ENCODE measurements at regions of chr3 and their contacts with region 1.

Region 1: DNA sequence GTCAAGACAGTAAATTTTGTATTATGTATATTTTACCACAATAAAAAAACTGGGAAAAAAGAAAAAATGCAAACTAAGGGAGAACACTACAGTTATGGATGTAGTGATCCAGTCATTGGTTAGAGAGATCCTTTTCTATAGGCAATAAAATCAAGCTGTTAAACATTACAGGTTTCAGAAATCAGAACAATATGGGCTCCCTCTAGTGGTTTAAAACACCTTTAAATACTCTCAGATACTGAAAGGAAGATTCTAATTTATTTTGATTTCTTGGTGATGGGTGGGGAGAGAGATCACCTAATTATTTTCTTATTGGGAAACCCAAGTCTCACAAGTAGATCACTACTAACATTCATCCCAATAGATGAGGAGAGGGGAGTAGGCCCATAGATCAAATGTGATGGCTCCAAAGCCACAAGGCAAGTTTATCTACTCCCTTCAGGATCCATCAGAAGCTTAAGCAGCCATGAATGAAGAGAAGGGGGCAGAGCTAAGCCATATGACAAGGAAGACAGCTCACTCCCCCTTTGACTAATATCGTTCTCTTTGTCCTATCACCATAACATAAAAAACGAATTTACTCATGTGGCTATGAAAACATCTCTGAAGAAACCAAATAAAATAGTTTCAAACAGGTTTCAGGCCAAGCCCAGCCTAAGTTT is 118.6 kb downstream of the ANO10 start:
- DNase-seq: no peak
- H3K4me3 Mint-ChIP-seq: no peak overlapping the region
- H3K27ac Mint-ChIP-seq: no peak overlapping the region
- H3K4me1 Mint-ChIP-seq: peaks cover 6% of the 10 kb centered on the region
- H3K27me3 Mint-ChIP-seq: peaks cover 17% of the 10 kb centered on the region

Region 2: DNA sequence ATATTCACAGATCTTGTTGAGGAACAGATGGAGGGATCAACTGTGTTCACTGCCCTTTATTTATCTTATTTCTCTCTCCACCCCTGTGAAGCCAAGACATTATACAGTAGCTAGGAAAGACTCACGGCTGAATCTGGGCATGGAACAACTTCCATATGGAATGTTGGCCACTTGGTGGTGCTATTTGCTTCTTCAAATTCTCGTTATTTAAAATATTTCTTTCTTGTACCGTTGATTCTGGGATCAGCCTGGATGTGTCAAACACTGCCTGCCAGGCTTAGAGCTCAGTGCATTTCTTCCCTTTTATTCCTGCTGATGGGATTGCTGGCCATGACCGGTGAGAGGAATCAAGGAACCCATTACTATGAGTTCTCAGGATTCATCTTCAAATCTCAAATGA is 541.6 kb before region 1 on chr3:
- intact Hi-C with region 1: loop called (anchors 10 kb)
- DNase-seq: no peak
- H3K4me3 Mint-ChIP-seq: no peak overlapping the region
- H3K27ac Mint-ChIP-seq: no peak overlapping the region
- H3K4me1 Mint-ChIP-seq: no peaks in the 10 kb centered on the region
- H3K27me3 Mint-ChIP-seq: peaks cover 14% of the 10 kb centered on the region

Region 3: DNA sequence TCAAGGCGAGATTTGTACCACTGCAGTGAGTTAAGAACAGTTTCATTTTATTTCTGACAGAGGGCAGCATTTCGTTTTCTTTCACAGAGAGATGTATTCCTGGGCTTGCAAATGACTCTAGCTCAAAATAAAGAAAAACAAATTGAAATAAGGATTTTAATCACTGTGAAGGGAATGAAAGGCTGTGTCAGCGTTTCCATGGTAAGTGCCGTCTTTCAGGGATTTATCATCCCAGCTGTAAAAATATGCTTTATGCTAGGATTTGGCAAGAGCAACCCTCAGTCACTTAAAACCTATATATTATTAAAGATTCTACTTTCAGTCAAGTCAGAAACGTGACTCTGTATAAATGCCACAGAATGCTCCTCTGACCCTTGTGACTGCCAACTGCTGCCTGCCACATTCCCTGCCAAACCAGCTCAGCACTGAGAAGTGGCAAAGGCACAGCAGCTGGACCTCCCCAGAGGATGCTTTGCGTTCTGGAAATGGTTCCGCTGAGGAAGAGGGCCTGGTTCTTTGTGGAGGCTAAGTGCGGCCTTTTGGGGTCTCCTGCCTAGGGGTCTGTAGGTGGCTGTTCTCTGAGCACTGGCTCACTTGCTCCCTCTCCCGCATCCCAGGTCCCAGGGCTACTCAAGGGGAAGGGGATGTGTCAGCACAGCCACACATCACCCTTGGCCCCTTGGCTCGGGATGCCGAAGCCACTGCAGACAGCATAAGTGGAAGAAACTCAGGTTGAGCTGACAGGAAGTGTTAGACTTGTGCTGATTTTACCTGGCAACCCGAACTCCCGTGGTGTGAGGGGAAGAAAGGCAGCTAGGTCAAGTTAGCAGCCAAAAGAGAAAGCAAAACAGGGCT is 340.7 kb before region 1 on chr3:
- intact Hi-C with region 1: loop called (anchors 1 kb)
- DNase-seq: peak; percentile 36
- H3K4me3 Mint-ChIP-seq: peak overlapping the region; percentile 21
- H3K27ac Mint-ChIP-seq: peak overlapping the region; percentile 73
- H3K4me1 Mint-ChIP-seq: peaks cover 15% of the 10 kb centered on the region
- H3K27me3 Mint-ChIP-seq: peaks cover 4% of the 10 kb centered on the region

Region 4: DNA sequence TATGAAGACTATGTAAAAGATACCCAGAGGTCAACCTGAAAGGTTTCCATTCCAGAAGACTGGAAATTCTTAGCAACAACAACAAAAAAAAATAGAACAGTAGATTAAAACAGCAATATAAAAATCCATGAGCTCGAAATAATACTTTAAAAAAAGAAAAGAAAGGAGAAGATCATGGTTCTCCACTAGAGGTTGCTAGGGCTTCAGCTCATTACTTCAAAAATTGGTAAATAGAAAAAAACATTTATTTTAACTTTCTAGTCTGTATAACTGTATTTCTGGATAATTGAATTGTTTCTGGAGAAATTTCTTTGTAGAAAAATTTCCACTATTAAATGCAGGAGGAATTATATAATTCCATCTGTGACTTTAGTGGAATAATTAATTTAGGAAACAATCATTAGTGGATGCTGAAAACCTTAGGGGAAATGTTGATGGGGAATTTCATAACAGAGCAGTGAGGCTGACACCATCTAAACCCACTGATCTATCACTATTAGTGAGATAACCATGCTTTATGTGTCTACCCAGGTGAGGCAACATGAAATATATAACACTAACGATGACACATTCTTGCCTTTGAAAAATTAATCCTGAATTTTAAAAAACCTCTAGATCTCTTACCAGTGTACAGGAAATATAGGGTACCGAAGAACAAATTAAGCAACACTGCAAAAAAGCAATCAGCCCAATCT is 279.4 kb before region 1 on chr3:
- intact Hi-C with region 1: loop called (anchors 5 kb)
- DNase-seq: no peak
- H3K4me3 Mint-ChIP-seq: no peak overlapping the region
- H3K27ac Mint-ChIP-seq: no peak overlapping the region
- H3K4me1 Mint-ChIP-seq: peaks cover 9% of the 10 kb centered on the region
- H3K27me3 Mint-ChIP-seq: peaks cover 7% of the 10 kb centered on the region

Region 5: GRCh38 chr3:43389388-43390254 is 113.6 kb before region 1 on chr3:
- intact Hi-C with region 1: loop called (anchors 5 kb)
- DNase-seq: peak; percentile 77
- H3K4me3 Mint-ChIP-seq: no peak overlapping the region
- H3K27ac Mint-ChIP-seq: peak overlapping the region; percentile 71
- H3K4me1 Mint-ChIP-seq: peaks cover 35% of the 10 kb centered on the region
- H3K27me3 Mint-ChIP-seq: peaks cover 15% of the 10 kb centered on the region

Region 6: DNA sequence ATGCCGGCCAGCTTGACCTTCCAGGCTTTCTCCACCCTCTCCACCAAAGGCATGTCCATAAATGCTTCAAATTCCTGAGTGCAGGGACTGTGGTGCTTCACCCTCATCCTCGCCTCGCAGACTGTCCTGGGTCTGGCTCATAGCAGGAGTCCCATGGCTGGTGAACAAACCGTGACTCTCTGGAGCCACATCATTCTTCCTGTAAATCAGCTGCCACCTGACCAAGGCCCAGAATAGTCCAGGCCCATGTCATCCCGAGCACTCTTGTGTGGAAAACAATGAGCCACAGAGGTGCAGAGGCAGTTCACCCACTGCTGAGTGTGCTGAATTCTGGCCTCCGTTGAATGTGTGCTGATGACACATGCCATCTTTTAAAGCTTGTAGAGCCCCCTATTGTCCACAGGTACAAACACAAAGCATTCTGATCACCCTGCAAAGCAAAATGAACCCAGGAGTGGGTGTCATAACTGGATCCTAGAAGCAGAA is 256.1 kb after region 1 on chr3:
- intact Hi-C with region 1: no loop called
- DNase-seq: no peak
- H3K4me3 Mint-ChIP-seq: no peak overlapping the region
- H3K27ac Mint-ChIP-seq: no peak overlapping the region
- H3K4me1 Mint-ChIP-seq: peaks cover 12% of the 10 kb centered on the region
- H3K27me3 Mint-ChIP-seq: peaks cover 6% of the 10 kb centered on the region